Dendritic cell treated with granulocyte-macrophage colony-stimulating factor and Interleukin-4, amounts not matched to agents 40 ng/mL and 50 ng/mL, for 4 days (primary cell): ENCODE measurements at regions of chr2 and their contacts with region 1.

Region 1: GRCh38 chr2:190927301-190927700 is 46.7 kb downstream of the GLS start:
- H3K4me3 Mint-ChIP-seq: no peak overlapping the region
- H3K27ac Mint-ChIP-seq: no peak overlapping the region
- H3K4me1 Mint-ChIP-seq: peaks cover 11% of the 10 kb centered on the region
- H3K27me3 Mint-ChIP-seq: no peaks in the 10 kb centered on the region

Region 2: DNA sequence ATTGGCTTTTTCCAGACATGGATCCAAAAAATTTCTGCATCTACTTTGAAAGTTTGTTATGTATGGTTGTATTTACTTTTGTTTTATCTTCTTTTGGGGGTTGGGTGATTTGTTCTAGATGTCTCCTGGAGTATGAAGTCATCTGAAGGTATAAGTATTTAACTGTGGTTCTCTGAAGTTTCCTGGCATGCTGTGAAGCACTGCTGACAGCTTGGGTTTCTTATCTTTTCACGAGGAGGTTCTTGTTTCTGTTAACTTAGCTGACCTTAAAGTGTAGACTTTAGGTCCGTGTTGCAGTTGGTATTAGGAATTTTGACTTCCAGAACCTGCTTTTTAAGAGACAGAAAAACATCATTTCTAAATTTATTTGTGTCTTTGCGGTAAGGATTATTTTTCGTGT is 30.8 kb before region 1 on chr2:
- intact Hi-C with region 1: loop called (anchors 5 kb)
- H3K4me3 Mint-ChIP-seq: no peak overlapping the region
- H3K27ac Mint-ChIP-seq: no peak overlapping the region
- H3K4me1 Mint-ChIP-seq: peaks cover 9% of the 10 kb centered on the region
- H3K27me3 Mint-ChIP-seq: no peaks in the 10 kb centered on the region

Region 3: GRCh38 chr2:190979906-190980629 is 52.8 kb after region 1 on chr2:
- intact Hi-C with region 1: loop called (anchors 10 kb)
- H3K4me3 Mint-ChIP-seq: no peak overlapping the region
- H3K27ac Mint-ChIP-seq: peak overlapping the region; percentile 83
- H3K4me1 Mint-ChIP-seq: peaks cover 25% of the 10 kb centered on the region
- H3K27me3 Mint-ChIP-seq: no peaks in the 10 kb centered on the region

Region 4: GRCh38 chr2:191013932-191014652 is 86.8 kb after region 1 on chr2 and contains the start of gene STAT1:
- intact Hi-C with region 1: loop called (anchors 5 kb)
- H3K4me3 Mint-ChIP-seq: no peak within 1 kb of the TSS
- H3K27ac Mint-ChIP-seq: no peak within 1 kb of the TSS
- H3K4me1 Mint-ChIP-seq: peaks cover 18% of the 10 kb centered on the region
- H3K27me3 Mint-ChIP-seq: no peaks in the 10 kb centered on the region